Panc1 (cell line): ENCODE measurements at regions of chr15 and their contacts with region 1.

Region 1: DNA sequence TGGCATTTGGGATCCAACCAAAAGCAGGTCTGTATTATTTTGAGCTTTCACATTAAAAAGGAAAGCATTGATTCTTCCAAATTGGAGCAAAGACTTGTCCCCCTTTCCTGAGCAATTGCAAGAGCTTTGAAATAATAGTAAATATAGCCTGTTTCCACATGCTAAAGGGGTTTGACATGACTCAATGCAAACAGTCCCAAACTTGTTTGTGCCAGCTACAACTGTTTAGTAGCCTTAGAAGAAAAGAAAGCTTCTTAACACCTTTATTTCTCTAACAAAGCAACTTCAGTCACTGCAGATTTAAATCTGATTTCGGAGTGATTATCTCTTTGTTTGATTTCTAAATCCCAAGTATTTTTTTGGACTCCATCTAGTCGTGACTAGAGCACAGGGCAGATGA is 180.2 kb downstream of the SEMA6D start:
- DNase-seq: no peak
- ATAC-seq: no peak
- H3K4me3 ChIP-seq: no peak overlapping the region
- H3K27ac ChIP-seq: no peak overlapping the region
- H3K4me1 ChIP-seq: no peaks in the 10 kb centered on the region
- H3K27me3 ChIP-seq: no peaks in the 10 kb centered on the region
- CTCF ChIP-seq: no peak

Region 2: DNA sequence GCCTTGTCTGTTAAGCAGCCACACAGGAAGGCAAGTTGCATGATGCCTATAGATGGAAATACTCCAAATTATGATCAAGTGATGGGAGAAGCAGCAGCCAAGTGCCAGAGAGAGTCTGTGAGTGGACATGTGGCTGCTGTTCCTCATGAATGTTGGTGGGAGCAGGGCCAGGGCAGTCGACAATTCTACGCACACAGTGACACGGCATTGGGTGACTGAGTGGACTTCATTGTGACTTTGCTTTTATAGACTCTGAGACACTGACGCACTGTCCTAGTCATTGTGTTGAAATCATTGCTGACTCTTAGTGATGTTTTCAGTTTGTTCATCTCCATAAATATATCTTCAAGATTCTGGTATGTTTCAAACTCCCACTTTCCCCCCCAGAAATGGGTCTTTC is 426.5 kb before region 1 on chr15:
- CTCF ChIA-PET with region 1: no interaction called
- POLR2A ChIA-PET with region 1: interaction called, 10 read pairs
- in situ Hi-C with region 1: no loop called
- intact Hi-C with region 1: no loop called
- DNase-seq: no peak
- ATAC-seq: no peak
- H3K4me3 ChIP-seq: no peak overlapping the region
- H3K27ac ChIP-seq: no peak overlapping the region
- H3K4me1 ChIP-seq: no peaks in the 10 kb centered on the region
- H3K27me3 ChIP-seq: no peaks in the 10 kb centered on the region
- CTCF ChIP-seq: no peak